ENCODE measurements at regions of chr22 and their contacts with region 1.

Region 1: DNA sequence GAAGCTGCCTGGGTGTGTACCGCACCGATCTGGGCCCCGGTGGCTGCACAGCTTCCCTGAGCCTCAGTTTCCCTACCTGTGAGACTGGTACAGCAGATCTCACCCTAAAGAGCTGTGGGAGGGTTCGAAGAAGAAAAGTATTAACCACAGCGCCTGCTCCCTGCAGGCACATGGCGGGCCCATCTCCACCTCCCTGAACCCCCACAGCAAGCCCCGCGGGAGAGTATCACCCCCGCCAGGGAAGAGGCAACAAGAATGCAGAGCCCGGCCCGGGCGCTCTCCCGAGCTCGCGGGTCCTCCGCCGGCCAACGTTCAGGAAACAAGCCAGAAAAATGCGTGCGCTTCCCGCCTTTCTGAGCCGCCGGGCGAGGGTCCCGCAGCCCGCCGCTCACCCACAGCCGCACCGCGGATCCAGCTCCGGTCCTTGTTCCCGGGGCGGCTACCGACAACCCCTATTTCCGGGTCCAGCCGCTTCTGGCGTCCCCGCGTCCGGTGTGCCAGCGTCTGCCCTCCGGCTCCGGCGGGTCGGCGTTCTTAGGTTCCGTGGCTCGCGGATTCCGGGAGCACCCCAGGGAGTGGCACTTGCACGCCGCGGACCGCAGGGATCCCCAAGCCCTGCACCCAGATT is at the start of gene TOP3B:
- DNase-seq: peak; percentile 65 to 90 (median 81)
- ATAC-seq: peak; percentile 95
- H3K4me3 ChIP-seq: peak within 1 kb of the TSS; percentile 93
- H3K4me3 Mint-ChIP-seq: peak within 1 kb of the TSS; percentile 87
- H3K27ac ChIP-seq: peak within 1 kb of the TSS; percentile 75 to 78
- H3K27ac Mint-ChIP-seq: peak within 1 kb of the TSS; percentile 89
- H3K4me1 ChIP-seq: peaks cover 15% of the 10 kb centered on the region
- H3K4me1 Mint-ChIP-seq: peaks cover 46% of the 10 kb centered on the region
- H3K27me3 ChIP-seq: no peaks in the 10 kb centered on the region
- H3K27me3 Mint-ChIP-seq: no peaks in the 10 kb centered on the region
- CTCF ChIP-seq: no peak
- total RNA-seq, gene TOP3B: 71.4 to 74.3 TPM

Region 2: DNA sequence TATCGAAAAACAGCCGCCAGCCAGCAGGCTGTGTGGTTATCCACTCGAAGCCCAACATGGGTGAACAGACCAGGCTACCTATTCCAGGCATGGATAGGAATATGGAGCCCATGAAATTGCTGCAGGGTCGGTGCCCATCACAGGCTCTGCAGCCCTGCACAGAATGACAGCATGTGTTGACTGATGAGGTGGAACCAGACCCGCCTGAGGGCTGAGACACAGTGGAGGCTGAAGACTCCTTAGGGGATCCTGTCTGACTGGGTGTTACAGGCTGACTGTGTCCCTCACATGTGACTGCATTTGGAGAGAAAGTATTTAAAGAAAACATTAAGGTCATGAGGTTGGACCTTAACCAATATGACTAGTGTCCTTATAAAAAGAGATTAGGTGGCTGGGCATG is 240.6 kb before region 1 on chr22:
- CTCF ChIA-PET with region 1: no interaction called
- POLR2A ChIA-PET with region 1: no interaction called
- intact Hi-C with region 1: no loop called
- DNase-seq: no peak
- ATAC-seq: no peak
- H3K4me3 ChIP-seq: no peak overlapping the region
- H3K4me3 Mint-ChIP-seq: no peak overlapping the region
- H3K27ac ChIP-seq: no peak overlapping the region
- H3K27ac Mint-ChIP-seq: no peak overlapping the region
- H3K4me1 ChIP-seq: no peaks in the 10 kb centered on the region
- H3K4me1 Mint-ChIP-seq: no peaks in the 10 kb centered on the region
- H3K27me3 ChIP-seq: no peaks in the 10 kb centered on the region
- H3K27me3 Mint-ChIP-seq: no peaks in the 10 kb centered on the region
- CTCF ChIP-seq: no peak

Region 3: DNA sequence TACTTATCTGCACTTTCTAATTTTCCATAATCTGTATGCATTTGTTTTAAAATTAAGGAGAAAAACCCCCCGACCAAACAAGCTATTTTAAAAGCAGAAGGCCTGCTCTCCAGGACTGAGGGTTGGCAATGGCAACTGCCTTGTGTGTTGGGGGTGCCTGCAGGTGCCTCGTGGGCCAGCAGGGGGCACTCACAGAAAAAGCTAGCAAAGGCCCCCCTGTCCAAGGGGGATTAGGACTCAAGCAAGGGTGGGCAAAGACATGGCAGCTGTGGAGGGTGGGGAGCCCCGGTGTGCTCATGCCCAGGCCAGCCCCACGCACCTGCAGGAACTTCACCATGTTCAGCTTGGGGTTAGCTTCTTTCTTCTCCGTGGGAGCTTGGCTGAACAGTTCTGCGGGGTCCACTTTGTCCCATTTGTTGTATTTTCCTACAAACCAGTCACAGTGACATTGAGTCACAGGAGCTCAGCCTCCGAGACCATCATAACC is 10.1 kb before region 1 on chr22:
- CTCF ChIA-PET with region 1: interaction called, 15 read pairs
- POLR2A ChIA-PET with region 1: interaction called, 6 read pairs
- intact Hi-C with region 1: no loop called
- DNase-seq: peak; percentile 29 to 65 (median 58)
- ATAC-seq: peak; percentile 85
- H3K4me3 ChIP-seq: no peak overlapping the region
- H3K4me3 Mint-ChIP-seq: no peak overlapping the region
- H3K27ac ChIP-seq: no peak overlapping the region
- H3K27ac Mint-ChIP-seq: no peak overlapping the region
- H3K4me1 ChIP-seq: no peaks in the 10 kb centered on the region
- H3K4me1 Mint-ChIP-seq: peaks cover 13% of the 10 kb centered on the region
- H3K27me3 ChIP-seq: no peaks in the 10 kb centered on the region
- H3K27me3 Mint-ChIP-seq: no peaks in the 10 kb centered on the region
- CTCF ChIP-seq: peak; percentile 94

Region 4: DNA sequence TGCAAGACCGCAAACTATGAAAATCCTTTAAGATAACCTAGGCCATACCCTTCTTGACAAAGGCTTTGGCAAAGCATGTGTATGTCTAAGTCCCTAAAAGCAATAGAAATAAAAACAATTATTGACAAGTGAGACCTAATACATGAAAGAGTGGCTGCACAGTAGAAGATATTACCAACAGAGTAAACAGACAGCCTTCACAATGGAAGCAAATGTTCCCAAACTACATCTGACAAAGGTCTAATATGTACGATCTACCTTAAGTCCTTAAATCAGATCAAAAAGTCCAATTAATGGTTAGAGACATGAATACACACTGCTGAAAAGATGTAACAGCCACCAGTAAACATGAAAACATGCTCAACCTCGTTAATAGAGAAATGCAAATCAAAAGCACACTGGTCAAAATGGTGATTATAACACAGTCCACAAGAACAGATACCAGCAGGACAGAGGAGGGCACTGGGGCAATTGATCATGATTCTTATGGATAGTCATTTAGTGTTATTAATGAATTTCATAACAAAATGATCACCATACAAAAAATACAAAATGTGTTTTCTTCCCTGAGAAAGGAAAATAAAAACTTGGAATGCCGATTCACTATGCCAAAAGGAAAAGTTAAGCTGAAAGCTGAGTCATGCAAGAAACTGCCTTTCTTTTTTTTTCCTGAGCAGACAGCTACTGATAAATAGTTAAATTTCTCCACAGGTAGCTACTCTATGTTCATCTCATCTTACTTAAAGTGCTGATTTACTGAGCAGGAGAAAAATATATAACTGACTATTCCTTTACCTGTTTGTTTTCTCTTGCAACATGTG is 159.5 kb after region 1 on chr22:
- CTCF ChIA-PET with region 1: no interaction called
- POLR2A ChIA-PET with region 1: no interaction called
- intact Hi-C with region 1: no loop called
- DNase-seq: no peak
- ATAC-seq: no peak
- H3K4me3 ChIP-seq: no peak overlapping the region
- H3K4me3 Mint-ChIP-seq: no peak overlapping the region
- H3K27ac ChIP-seq: no peak overlapping the region
- H3K27ac Mint-ChIP-seq: no peak overlapping the region
- H3K4me1 ChIP-seq: no peaks in the 10 kb centered on the region
- H3K4me1 Mint-ChIP-seq: no peaks in the 10 kb centered on the region
- H3K27me3 ChIP-seq: peaks cover 0 to 3% of the 10 kb centered on the region in 2 experiments
- H3K27me3 Mint-ChIP-seq: peaks cover 28% of the 10 kb centered on the region
- CTCF ChIP-seq: no peak

Measured in CD8-positive, alpha-beta T cell (primary cell).